AG04450 (cell line): ENCODE measurements at regions of chr3 and their contacts with region 1.

Region 1: GRCh38 chr3:38346587-38347410 is at the start of gene XYLB:
- DNase-seq: peak; percentile 55
- H3K4me3 ChIP-seq: peak within 1 kb of the TSS; percentile 80
- H3K27ac ChIP-seq: no peak within 1 kb of the TSS
- H3K27me3 ChIP-seq: no peaks in the 10 kb centered on the region
- CTCF ChIP-seq: peak; percentile 83
- polyA plus RNA-seq, gene XYLB: 3.1 and 4.0 TPM in 2 replicates

Region 2: GRCh38 chr3:38117748-38118420 is 228.9 kb before region 1 on chr3:
- CTCF ChIA-PET with region 1: interaction called, 10 read pairs
- POLR2A ChIA-PET with region 1: no interaction called
- DNase-seq: peak; percentile 10
- H3K4me3 ChIP-seq: no peak overlapping the region
- H3K27ac ChIP-seq: no peak overlapping the region
- H3K27me3 ChIP-seq: peaks cover 6% of the 10 kb centered on the region
- CTCF ChIP-seq: peak; percentile 78

Region 3: DNA sequence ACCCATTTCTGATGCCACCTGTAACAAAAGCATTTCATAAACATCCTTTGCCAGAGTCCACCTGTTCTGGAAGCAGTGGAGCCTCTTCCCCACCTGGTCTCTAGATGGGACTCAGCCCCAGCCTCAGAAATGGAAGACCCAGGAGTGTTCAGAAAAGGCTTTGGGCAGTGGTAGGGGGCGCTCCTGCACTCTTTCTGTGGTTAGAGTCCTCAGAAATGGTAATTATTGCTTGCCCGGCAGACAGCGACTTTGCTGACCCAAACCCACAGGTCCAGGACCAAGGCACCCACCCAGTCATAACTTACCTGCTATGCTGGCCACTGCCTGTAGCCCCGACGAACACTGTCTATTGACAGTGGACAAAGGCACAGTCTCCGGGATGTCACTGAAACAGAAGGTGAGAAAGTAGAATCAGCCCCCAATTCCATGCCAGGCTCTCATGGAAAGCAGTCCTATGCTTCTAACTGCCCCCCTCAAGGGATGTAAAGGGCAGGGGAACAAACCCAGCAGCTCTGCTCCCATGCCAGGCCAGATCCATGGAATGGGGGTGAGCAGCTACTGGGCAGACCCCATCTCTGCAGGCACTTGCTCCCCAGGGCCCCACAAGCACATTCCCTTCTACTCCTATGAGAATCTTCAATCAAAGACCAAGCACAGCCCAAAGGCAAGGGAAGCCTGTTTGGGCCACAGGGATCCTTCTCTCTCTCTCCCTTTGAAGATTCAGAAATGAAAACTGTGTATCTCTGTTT is 215.0 kb before region 1 on chr3:
- CTCF ChIA-PET with region 1: interaction called, 20 read pairs
- POLR2A ChIA-PET with region 1: no interaction called
- DNase-seq: no peak
- H3K4me3 ChIP-seq: no peak overlapping the region
- H3K27ac ChIP-seq: no peak overlapping the region
- H3K27me3 ChIP-seq: no peaks in the 10 kb centered on the region
- CTCF ChIP-seq: peak; percentile 63

Region 4: GRCh38 chr3:38136777-38137614 is 209.8 kb before region 1 on chr3 and contains the start of gene ACAA1:
- CTCF ChIA-PET with region 1: interaction called, 20 read pairs
- POLR2A ChIA-PET with region 1: no interaction called
- DNase-seq: peak; percentile 97
- H3K4me3 ChIP-seq: peak within 1 kb of the TSS; percentile 88
- H3K27ac ChIP-seq: peak within 1 kb of the TSS; percentile 89
- H3K27me3 ChIP-seq: no peaks in the 10 kb centered on the region
- CTCF ChIP-seq: no peak
- polyA plus RNA-seq, gene ACAA1: 47.6 and 50.9 TPM in 2 replicates

Region 5: DNA sequence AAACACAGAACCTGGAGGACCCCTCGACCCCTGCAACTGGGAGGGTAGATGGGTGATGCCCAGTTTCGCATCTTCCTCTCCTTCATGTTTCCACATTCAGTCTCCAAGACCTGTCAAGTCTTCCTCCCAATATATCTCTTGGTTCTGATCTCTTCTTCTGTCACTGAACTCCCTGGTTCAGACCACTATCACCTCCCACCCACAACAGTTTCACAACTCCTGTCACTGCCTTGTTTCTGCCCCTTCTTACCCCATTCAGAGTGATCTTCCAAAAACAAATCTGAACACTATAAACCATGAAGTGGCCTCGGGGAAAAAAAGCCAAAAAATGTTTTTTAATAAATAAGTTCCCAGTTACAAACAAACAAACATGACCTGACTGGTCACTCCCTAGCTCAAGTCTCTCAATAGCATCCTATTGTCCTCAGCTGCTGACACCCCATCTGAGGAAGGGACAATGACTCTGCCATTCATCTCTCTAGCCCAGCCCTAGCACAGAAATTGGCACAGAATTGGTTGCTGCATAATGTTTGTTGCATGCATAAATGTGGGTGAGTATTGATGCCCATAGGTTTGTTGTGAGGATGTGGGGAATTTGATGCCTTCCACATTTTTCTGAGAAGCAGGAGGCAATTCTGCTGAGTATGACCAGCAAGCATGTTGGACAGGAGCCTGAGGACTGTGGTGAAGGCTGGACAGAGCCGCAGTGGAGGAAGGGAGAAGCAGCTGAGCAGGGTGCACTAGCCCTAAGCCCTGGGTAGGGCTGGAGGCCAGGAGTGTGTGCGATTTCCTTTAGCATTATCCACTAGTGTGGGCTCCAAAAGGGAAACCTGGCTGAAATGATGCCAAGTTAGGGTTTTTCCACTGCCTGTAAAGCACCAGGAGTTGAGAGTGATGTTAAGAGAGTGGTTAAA is 12.4 kb before region 1 on chr3:
- CTCF ChIA-PET with region 1: interaction called, 21 read pairs
- POLR2A ChIA-PET with region 1: no interaction called
- DNase-seq: peak; percentile 18
- H3K4me3 ChIP-seq: no peak overlapping the region
- H3K27ac ChIP-seq: no peak overlapping the region
- H3K27me3 ChIP-seq: peaks cover 3% of the 10 kb centered on the region
- CTCF ChIP-seq: no peak

Region 6: GRCh38 chr3:38479431-38480092 is 132.8 kb after region 1 on chr3:
- CTCF ChIA-PET with region 1: interaction called, 117 read pairs
- POLR2A ChIA-PET with region 1: no interaction called
- DNase-seq: peak; percentile 37
- H3K4me3 ChIP-seq: no peak overlapping the region
- H3K27ac ChIP-seq: no peak overlapping the region
- H3K27me3 ChIP-seq: no peaks in the 10 kb centered on the region
- CTCF ChIP-seq: peak; percentile 96

Region 7: GRCh38 chr3:38490281-38491030 is 143.7 kb after region 1 on chr3:
- CTCF ChIA-PET with region 1: interaction called, 17 read pairs
- POLR2A ChIA-PET with region 1: no interaction called
- DNase-seq: no peak
- H3K4me3 ChIP-seq: no peak overlapping the region
- H3K27ac ChIP-seq: no peak overlapping the region
- H3K27me3 ChIP-seq: no peaks in the 10 kb centered on the region
- CTCF ChIP-seq: no peak